ENCODE measurements at regions of chr18 and their contacts with region 1.

Region 1: GRCh38 chr18:5413447-5413846 is 117.9 kb upstream of the ZBTB14 start:
- DNase-seq: no peak
- H3K4me3 ChIP-seq: no peak overlapping the region
- H3K27ac ChIP-seq: no peak overlapping the region
- H3K4me1 ChIP-seq: peaks cover 4 to 10% (median 9%) of the 10 kb centered on the region in 4 experiments
- H3K27me3 ChIP-seq: no peaks in the 10 kb centered on the region
- CTCF ChIP-seq: no peak
- EP300 ChIP-seq: no peak
- POLR2A ChIP-seq: no peak
- RAD21 ChIP-seq: no peak

Region 2: GRCh38 chr18:5424903-5425664 is 11.6 kb after region 1 on chr18:
- CTCF ChIA-PET with region 1: interaction called, 13 read pairs
- POLR2A ChIA-PET with region 1: no interaction called
- DNase-seq: no peak
- H3K4me3 ChIP-seq: no peak overlapping the region
- H3K27ac ChIP-seq: no peak overlapping the region
- H3K4me1 ChIP-seq: no peaks in the 10 kb centered on the region; a peak in 1 of 7 replicates
- H3K27me3 ChIP-seq: no peaks in the 10 kb centered on the region
- CTCF ChIP-seq: peak in 2 of 3 experiments; percentile 35 to 49; a peak in 2 of 4 replicates
- EP300 ChIP-seq: no peak
- POLR2A ChIP-seq: no peak
- RAD21 ChIP-seq: peak; percentile 56 to 62

Region 3: DNA sequence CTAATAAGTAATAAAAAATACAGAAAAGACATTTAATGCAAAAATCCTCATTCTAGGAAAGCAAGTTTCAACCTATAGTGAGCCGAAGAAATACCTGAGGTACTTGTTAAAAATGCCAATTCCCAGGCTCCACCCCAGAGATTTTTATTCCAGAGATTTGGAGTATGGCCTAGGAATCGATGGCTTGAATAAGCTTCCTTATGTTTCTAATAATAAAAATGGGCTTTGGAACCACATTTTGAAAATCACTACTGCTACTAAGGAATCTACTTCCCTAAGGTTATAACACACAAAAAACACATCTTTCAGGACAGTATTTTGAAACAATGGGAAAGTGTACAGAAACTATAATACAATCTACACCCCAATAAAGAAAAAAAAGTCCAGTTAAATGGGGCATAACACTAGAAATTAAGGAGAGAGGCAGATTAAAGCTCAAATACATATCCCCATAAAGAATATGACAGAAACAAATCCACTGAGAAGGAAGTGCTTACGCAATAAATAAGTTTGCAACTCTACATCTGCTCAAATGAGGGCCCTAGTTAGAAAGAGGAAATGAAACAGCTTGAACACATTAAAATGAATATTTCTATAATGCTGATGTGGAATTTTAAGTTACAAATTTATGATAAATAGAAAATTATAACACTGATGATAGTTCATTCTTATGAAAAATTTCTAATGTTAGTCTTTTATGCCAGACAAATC is 26.7 kb after region 1 on chr18:
- CTCF ChIA-PET with region 1: no interaction called
- POLR2A ChIA-PET with region 1: no interaction called
- DNase-seq: no peak
- H3K4me3 ChIP-seq: no peak overlapping the region
- H3K27ac ChIP-seq: no peak overlapping the region
- H3K4me1 ChIP-seq: no peaks in the 10 kb centered on the region
- H3K27me3 ChIP-seq: no peaks in the 10 kb centered on the region
- CTCF ChIP-seq: no peak
- EP300 ChIP-seq: no peak
- POLR2A ChIP-seq: no peak
- RAD21 ChIP-seq: no peak

Measured in H1 (cell line).